ENCODE measurements at regions of chr5 and their contacts with region 1.

Region 1: GRCh38 chr5:6291961-6292360 is 86.4 kb downstream of the MED10 start:
- DNase-seq: peak in 3 of 5 donors; percentile 5 to 22 (median 14)
- H3K4me3 ChIP-seq: no peak overlapping the region
- H3K4me3 Mint-ChIP-seq: no peak overlapping the region
- H3K27ac ChIP-seq: no peak overlapping the region
- H3K27ac Mint-ChIP-seq: peak overlapping the region in 1 of 7 donors; percentile 19
- H3K4me1 ChIP-seq: no peaks in the 10 kb centered on the region
- H3K4me1 Mint-ChIP-seq: peaks cover 0 to 1% (median 0%) of the 10 kb centered on the region in 4 donors
- H3K27me3 ChIP-seq: no peaks in the 10 kb centered on the region
- H3K27me3 Mint-ChIP-seq: no peaks in the 10 kb centered on the region

Region 2: DNA sequence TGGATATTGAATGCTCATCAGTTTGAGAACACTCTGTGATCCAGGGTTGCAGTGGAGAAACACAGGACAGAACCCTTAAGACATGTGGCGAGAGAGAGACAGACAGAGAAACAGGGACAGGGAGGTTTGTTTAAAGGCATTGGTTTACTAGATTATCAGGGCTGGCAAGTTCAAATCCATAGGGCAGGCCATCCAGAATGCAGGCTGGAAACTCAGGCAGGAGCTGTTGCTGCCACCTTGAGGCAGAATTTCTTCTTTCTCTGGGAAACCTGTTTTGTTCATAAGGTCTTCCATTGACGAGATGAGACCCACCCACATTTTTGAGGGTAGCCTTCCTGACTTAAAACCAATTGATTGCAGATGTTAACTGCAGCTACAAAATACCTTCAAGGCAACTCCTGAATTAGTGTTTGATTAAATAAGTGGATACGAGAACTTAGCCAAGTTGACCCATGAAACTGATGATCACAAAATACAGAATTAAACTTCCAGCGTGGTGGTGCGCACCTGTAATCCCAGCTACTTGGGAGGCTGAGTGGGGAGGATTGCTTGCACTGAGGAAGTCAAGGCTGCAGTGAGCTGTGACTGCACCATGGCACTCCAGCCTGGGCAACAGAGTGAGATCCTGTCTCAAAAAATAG is 285.0 kb after region 1 on chr5:
- CTCF ChIA-PET with region 1: no interaction called
- POLR2A ChIA-PET with region 1: no interaction called
- intact Hi-C with region 1: loop called (anchors 2 kb)
- DNase-seq: peak in 1 of 5 donors; percentile 12
- H3K4me3 ChIP-seq: no peak overlapping the region
- H3K4me3 Mint-ChIP-seq: no peak overlapping the region
- H3K27ac ChIP-seq: no peak overlapping the region
- H3K27ac Mint-ChIP-seq: no peak overlapping the region
- H3K4me1 ChIP-seq: no peaks in the 10 kb centered on the region
- H3K4me1 Mint-ChIP-seq: no peaks in the 10 kb centered on the region
- H3K27me3 ChIP-seq: peaks cover 8% of the 10 kb centered on the region
- H3K27me3 Mint-ChIP-seq: peaks cover 27 to 29% of the 10 kb centered on the region in 2 donors

Measured in CD4-positive, alpha-beta memory T cell (primary cell).